ENCODE measurements at regions of chr11 and their contacts with region 1.

Region 1: GRCh38 chr11:10322830-10323792 is 18.2 kb downstream of the ADM start:
- DNase-seq: peak; percentile 49 to 70 (median 68)
- H3K4me3 ChIP-seq: no peak overlapping the region
- H3K4me3 Mint-ChIP-seq: no peak overlapping the region
- H3K27ac ChIP-seq: no peak overlapping the region
- H3K27ac Mint-ChIP-seq: peak overlapping the region in 4 of 7 donors; percentile 58 to 75 (median 67)
- H3K4me1 ChIP-seq: peaks cover 20 to 23% of the 10 kb centered on the region in 2 donors
- H3K4me1 Mint-ChIP-seq: peaks cover 27% of the 10 kb centered on the region
- H3K27me3 ChIP-seq: no peaks in the 10 kb centered on the region
- H3K27me3 Mint-ChIP-seq: peaks cover 0 to 7% (median 0%) of the 10 kb centered on the region in 3 donors
- CTCF ChIP-seq: peak; percentile 69

Region 2: GRCh38 chr11:9757809-9758636 is 565.1 kb before region 1 on chr11:
- intact Hi-C with region 1: loop called in 1 of 2 experiments (anchors 5 kb)
- DNase-seq: peak; percentile 78 to 92 (median 84)
- H3K4me3 ChIP-seq: peak overlapping the region; percentile 50 to 82 (median 66)
- H3K4me3 Mint-ChIP-seq: peak overlapping the region; percentile 76 to 91
- H3K27ac ChIP-seq: peak overlapping the region in 1 of 2 donors; percentile 75
- H3K27ac Mint-ChIP-seq: peak overlapping the region; percentile 38 to 91 (median 79)
- H3K4me1 ChIP-seq: peaks cover 19 to 24% of the 10 kb centered on the region in 2 donors
- H3K4me1 Mint-ChIP-seq: peaks cover 41% of the 10 kb centered on the region
- H3K27me3 ChIP-seq: no peaks in the 10 kb centered on the region
- H3K27me3 Mint-ChIP-seq: peaks cover 5 to 8% (median 7%) of the 10 kb centered on the region in 3 donors
- CTCF ChIP-seq: peak; percentile 92

Region 3: DNA sequence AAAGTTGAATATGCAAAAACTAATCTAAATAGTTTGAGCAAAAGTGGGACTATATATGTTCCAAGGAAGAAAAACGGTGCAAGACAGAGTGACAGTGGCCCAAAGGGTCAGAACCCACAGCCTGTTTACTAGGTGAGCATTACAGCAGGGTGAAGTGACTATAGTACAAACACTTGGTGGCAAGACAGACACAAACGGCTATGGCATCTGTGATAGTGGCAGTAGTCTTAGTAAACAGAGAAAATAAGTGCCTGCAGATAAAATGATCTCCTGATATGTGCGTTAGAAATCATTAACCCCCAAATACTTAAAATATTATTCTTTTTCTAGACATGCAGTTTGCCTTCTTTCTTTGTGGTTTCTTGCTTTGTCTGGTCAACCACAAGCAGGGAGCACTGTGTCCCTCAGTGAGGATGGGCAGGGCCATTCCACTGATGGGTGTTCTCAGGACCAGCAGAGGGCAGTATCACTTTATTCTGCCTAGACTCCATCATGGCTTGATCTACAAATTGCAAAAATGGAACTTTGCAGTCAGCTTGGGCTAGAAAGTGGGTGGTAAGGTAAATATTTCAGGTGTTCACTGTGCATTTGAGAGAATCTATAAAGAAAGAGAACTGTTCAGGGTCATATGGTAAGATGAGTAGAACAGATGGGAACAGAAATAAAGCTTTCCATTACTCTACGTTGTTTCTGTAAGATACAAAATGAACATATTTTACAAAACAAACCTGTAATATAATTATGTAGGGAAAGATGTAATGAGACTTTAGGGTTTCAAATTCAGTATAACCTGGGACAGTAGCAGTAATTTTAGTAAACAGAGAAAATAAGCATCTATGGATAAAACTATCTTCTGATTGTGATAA is 461.0 kb before region 1 on chr11:
- intact Hi-C with region 1: loop called (anchors 5 kb)
- DNase-seq: peak; percentile 30 to 55 (median 49)
- H3K4me3 ChIP-seq: no peak overlapping the region
- H3K4me3 Mint-ChIP-seq: no peak overlapping the region
- H3K27ac ChIP-seq: no peak overlapping the region
- H3K27ac Mint-ChIP-seq: no peak overlapping the region
- H3K4me1 ChIP-seq: no peaks in the 10 kb centered on the region
- H3K4me1 Mint-ChIP-seq: peaks cover 8% of the 10 kb centered on the region
- H3K27me3 ChIP-seq: no peaks in the 10 kb centered on the region
- H3K27me3 Mint-ChIP-seq: no peaks in the 10 kb centered on the region
- CTCF ChIP-seq: peak; percentile 78

Region 4: GRCh38 chr11:10208131-10208575 is 115.0 kb before region 1 on chr11:
- intact Hi-C with region 1: loop called in 1 of 2 experiments (anchors 5 kb)
- DNase-seq: peak; percentile 32 to 61 (median 48)
- H3K4me3 ChIP-seq: no peak overlapping the region
- H3K4me3 Mint-ChIP-seq: no peak overlapping the region
- H3K27ac ChIP-seq: no peak overlapping the region
- H3K27ac Mint-ChIP-seq: no peak overlapping the region
- H3K4me1 ChIP-seq: no peaks in the 10 kb centered on the region
- H3K4me1 Mint-ChIP-seq: peaks cover 2% of the 10 kb centered on the region
- H3K27me3 ChIP-seq: no peaks in the 10 kb centered on the region
- H3K27me3 Mint-ChIP-seq: no peaks in the 10 kb centered on the region
- CTCF ChIP-seq: peak; percentile 81